PC-9 (cell line): ENCODE measurements at regions of chr1 and their contacts with region 1.

Region 1: GRCh38 chr1:24266398-24266941 is 52.7 kb upstream of the GRHL3 start:
- DNase-seq: peak; percentile 94 to 98
- H3K4me3 ChIP-seq: no peak overlapping the region
- H3K27ac ChIP-seq: peak overlapping the region; percentile 78
- H3K4me1 ChIP-seq: peaks cover 50% of the 10 kb centered on the region
- H3K27me3 ChIP-seq: no peaks in the 10 kb centered on the region
- CTCF ChIP-seq: 0 out of 2 replicates have a peak, but pooled peaks have one; percentile 19

Region 2: GRCh38 chr1:24226749-24227148 is 39.7 kb before region 1 on chr1:
- CTCF ChIA-PET with region 1: no interaction called
- POLR2A ChIA-PET with region 1: no interaction called
- intact Hi-C with region 1: no loop called
- DNase-seq: no peak
- H3K4me3 ChIP-seq: no peak overlapping the region
- H3K27ac ChIP-seq: no peak overlapping the region
- H3K4me1 ChIP-seq: no peaks in the 10 kb centered on the region
- H3K27me3 ChIP-seq: no peaks in the 10 kb centered on the region
- CTCF ChIP-seq: no peak

Region 3: GRCh38 chr1:24283326-24284155 is 17.1 kb after region 1 on chr1:
- CTCF ChIA-PET with region 1: no interaction called
- POLR2A ChIA-PET with region 1: interaction called, 5 read pairs
- intact Hi-C with region 1: loop called (anchors 1 kb)
- DNase-seq: peak; percentile 54 to 90
- H3K4me3 ChIP-seq: no peak overlapping the region
- H3K27ac ChIP-seq: peak overlapping the region; percentile 94
- H3K4me1 ChIP-seq: peaks cover 59% of the 10 kb centered on the region
- H3K27me3 ChIP-seq: no peaks in the 10 kb centered on the region
- CTCF ChIP-seq: no peak

Region 4: DNA sequence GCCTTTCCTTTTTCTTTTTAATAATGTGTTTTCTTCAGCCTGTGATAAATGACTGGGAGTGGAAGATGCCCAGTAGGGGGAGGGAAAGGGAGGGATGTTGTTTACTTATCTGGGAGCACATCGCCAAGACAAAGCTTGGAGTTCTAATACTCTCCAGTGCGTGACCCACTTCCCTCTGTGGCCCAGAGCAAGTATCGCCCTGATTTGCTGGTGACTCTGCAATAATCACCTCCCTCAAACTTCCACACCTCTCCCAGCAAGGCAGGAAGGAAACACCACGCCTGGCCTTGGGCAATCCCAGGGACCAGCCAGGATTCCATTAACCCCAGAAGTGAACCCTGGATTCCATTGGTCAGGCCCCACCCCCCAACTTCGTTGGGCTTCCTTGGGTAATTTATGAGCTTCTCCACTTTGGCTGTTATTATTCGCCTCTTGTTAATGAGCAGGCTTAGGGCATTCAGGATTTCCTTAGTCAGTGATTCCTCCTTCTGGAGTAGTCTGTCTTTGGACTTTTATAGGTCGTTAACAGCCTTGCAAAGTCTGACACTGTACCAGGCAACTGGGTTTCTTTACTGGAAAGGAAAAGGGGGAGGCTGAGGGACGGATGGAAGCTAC is 28.4 kb after region 1 on chr1:
- CTCF ChIA-PET with region 1: no interaction called
- POLR2A ChIA-PET with region 1: no interaction called
- intact Hi-C with region 1: loop called (anchors 1 kb)
- DNase-seq: peak; percentile 79 to 94
- H3K4me3 ChIP-seq: peak overlapping the region; percentile 46; the same call in 1 of the 2 replicates
- H3K27ac ChIP-seq: peak overlapping the region; percentile 100
- H3K4me1 ChIP-seq: peaks cover 55% of the 10 kb centered on the region
- H3K27me3 ChIP-seq: no peaks in the 10 kb centered on the region
- CTCF ChIP-seq: 0 out of 2 replicates have a peak, but pooled peaks have one; percentile 25

Region 5: GRCh38 chr1:24308365-24309015 is 42.0 kb after region 1 on chr1:
- CTCF ChIA-PET with region 1: no interaction called
- POLR2A ChIA-PET with region 1: no interaction called
- intact Hi-C with region 1: no loop called
- DNase-seq: no peak
- H3K4me3 ChIP-seq: no peak overlapping the region
- H3K27ac ChIP-seq: peak overlapping the region; percentile 40; the same call in 1 of the 2 replicates
- H3K4me1 ChIP-seq: peaks cover 31% of the 10 kb centered on the region
- H3K27me3 ChIP-seq: no peaks in the 10 kb centered on the region
- CTCF ChIP-seq: peak; percentile 32; the same call in 1 of the 2 replicates

Region 6: GRCh38 chr1:24374891-24375786 is 108.7 kb after region 1 on chr1:
- CTCF ChIA-PET with region 1: no interaction called
- POLR2A ChIA-PET with region 1: no interaction called
- intact Hi-C with region 1: loop called (anchors 1 kb)
- DNase-seq: peak; percentile 51 to 92
- H3K4me3 ChIP-seq: peak overlapping the region; percentile 34; the same call in 1 of the 2 replicates
- H3K27ac ChIP-seq: peak overlapping the region; percentile 95
- H3K4me1 ChIP-seq: peaks cover 39% of the 10 kb centered on the region
- H3K27me3 ChIP-seq: no peaks in the 10 kb centered on the region
- CTCF ChIP-seq: no peak